ENCODE measurements at regions of chr22 and their contacts with region 1.

Region 1: GRCh38 chr22:26522592-26522991 is 10.3 kb upstream of the TFIP11 start:
- DNase-seq: no peak
- H3K4me3 ChIP-seq: no peak overlapping the region
- H3K27ac ChIP-seq: no peak overlapping the region
- H3K4me1 ChIP-seq: no peaks in the 10 kb centered on the region
- H3K27me3 ChIP-seq: no peaks in the 10 kb centered on the region
- CTCF ChIP-seq: no peak

Region 2: DNA sequence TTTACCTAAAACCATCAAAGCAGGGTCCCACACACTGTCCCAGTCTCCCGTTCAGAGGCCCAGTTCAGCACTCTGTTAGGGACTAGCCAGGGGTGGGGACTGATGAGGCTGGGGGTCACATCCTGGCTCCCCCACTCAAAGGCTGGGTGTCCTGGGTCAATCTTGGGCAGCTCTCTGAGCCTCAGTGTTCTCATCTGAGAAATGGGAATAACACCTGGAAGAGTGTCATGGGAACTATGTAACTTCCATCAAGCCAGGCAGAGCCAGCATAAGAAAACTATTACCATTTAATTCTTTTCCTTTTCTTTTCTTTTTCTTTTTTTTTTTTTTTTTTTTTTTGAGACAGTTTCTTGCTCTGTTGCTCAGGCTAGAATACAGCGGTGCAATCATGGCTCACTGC is 29.0 kb after region 1 on chr22:
- CTCF ChIA-PET with region 1: interaction called, 12 read pairs
- POLR2A ChIA-PET with region 1: no interaction called
- intact Hi-C with region 1: no loop called
- DNase-seq: no peak
- H3K4me3 ChIP-seq: no peak overlapping the region
- H3K27ac ChIP-seq: no peak overlapping the region
- H3K4me1 ChIP-seq: peaks cover 3% of the 10 kb centered on the region
- H3K27me3 ChIP-seq: no peaks in the 10 kb centered on the region
- CTCF ChIP-seq: no peak

Region 3: GRCh38 chr22:27489176-27489675 is 966.6 kb after region 1 on chr22:
- CTCF ChIA-PET with region 1: no interaction called
- POLR2A ChIA-PET with region 1: no interaction called
- intact Hi-C with region 1: no loop called
- DNase-seq: no peak
- H3K4me3 ChIP-seq: no peak overlapping the region
- H3K27ac ChIP-seq: no peak overlapping the region
- H3K4me1 ChIP-seq: no peaks in the 10 kb centered on the region
- H3K27me3 ChIP-seq: no peaks in the 10 kb centered on the region
- CTCF ChIP-seq: no peak

Measured in A673 (cell line).